ENCODE measurements at regions of chr16 and their contacts with region 1.

Region 1: GRCh38 chr16:57422026-57422944 is 17.7 kb downstream of the CCL17 start:
- DNase-seq: peak; percentile 55 to 72
- ATAC-seq: peak; percentile 67 to 73
- H3K4me3 ChIP-seq: no peak overlapping the region
- H3K27ac ChIP-seq: peak overlapping the region in 1 of 2 experiments; percentile 47; a peak in 3 of 6 replicates
- H3K4me1 ChIP-seq: peaks cover 31% of the 10 kb centered on the region
- CTCF ChIP-seq: peak; percentile 75
- EP300 ChIP-seq: no peak
- POLR2A ChIP-seq: no peak
- RAD21 ChIP-seq: peak; percentile 82 to 86

Region 2: GRCh38 chr16:57084257-57084770 is 338.0 kb before region 1 on chr16:
- CTCF ChIA-PET with region 1: interaction called, 10 read pairs
- POLR2A ChIA-PET with region 1: no interaction called
- DNase-seq: peak; percentile 81 to 93
- ATAC-seq: peak; percentile 67 to 87
- H3K4me3 ChIP-seq: no peak overlapping the region
- H3K27ac ChIP-seq: peak overlapping the region in 1 of 2 experiments; percentile 56; a peak in 3 of 6 replicates
- H3K4me1 ChIP-seq: no peaks in the 10 kb centered on the region
- CTCF ChIP-seq: peak; percentile 90
- EP300 ChIP-seq: no peak
- POLR2A ChIP-seq: no peak
- RAD21 ChIP-seq: peak; percentile 86 to 90

Region 3: DNA sequence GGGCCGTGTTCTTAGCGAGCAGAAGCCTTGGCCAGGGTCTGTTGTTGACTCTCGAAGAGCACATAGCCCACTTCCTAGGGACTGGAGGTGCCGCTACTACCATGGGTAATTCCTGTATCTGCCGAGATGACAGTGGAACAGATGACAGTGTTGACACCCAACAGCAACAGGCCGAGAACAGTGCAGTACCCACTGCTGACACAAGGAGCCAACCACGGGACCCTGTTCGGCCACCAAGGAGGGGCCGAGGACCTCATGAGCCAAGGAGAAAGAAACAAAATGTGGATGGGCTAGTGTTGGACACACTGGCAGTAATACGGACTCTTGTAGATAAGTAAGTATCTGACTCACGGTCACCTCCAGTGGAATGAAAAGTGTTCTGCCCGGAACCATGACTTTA is 217.6 kb before region 1 on chr16:
- CTCF ChIA-PET with region 1: no interaction called
- POLR2A ChIA-PET with region 1: no interaction called
- DNase-seq: no peak
- ATAC-seq: peak in 1 of 2 experiments; percentile 53; a peak in 2 of 6 replicates
- H3K4me3 ChIP-seq: no peak overlapping the region
- H3K27ac ChIP-seq: no peak overlapping the region
- H3K4me1 ChIP-seq: no peaks in the 10 kb centered on the region
- CTCF ChIP-seq: no peak
- EP300 ChIP-seq: 0 out of 5 replicates have a peak, but pooled peaks of 1 of the 2 experiments have one; percentile 16
- POLR2A ChIP-seq: no peak
- RAD21 ChIP-seq: no peak

Region 4: DNA sequence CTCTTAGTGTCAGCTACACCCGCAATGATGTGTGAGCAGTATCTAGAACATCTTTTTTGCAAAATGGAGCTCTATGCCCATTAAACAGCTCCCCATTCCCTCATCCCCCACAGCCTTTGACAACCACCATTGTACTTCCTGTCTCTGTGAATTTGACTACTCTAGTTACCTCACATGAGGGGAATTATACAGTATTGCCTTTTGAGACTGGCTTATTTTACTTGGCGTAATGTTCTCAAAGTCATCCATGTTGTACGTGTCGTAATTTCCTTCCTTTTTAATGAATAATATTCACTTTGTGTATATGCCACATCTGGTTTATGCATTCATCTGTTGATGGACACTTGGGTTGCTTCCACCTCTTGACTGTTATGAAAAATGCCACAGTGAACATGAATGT is 86.9 kb before region 1 on chr16:
- CTCF ChIA-PET with region 1: interaction called, 18 read pairs
- POLR2A ChIA-PET with region 1: no interaction called
- DNase-seq: no peak
- ATAC-seq: no peak
- H3K4me3 ChIP-seq: no peak overlapping the region
- H3K27ac ChIP-seq: no peak overlapping the region
- H3K4me1 ChIP-seq: peaks cover 8% of the 10 kb centered on the region; the same call in 2 of the 3 replicates
- CTCF ChIP-seq: no peak
- EP300 ChIP-seq: no peak
- POLR2A ChIP-seq: no peak
- RAD21 ChIP-seq: no peak

Region 5: GRCh38 chr16:57409870-57410585 is 12.3 kb before region 1 on chr16:
- CTCF ChIA-PET with region 1: interaction called, 47 read pairs
- POLR2A ChIA-PET with region 1: no interaction called
- DNase-seq: no peak
- ATAC-seq: no peak
- H3K4me3 ChIP-seq: no peak overlapping the region
- H3K27ac ChIP-seq: no peak overlapping the region
- H3K4me1 ChIP-seq: no peaks in the 10 kb centered on the region
- CTCF ChIP-seq: no peak
- EP300 ChIP-seq: no peak
- POLR2A ChIP-seq: no peak
- RAD21 ChIP-seq: no peak

Region 6: GRCh38 chr16:57447186-57447962 is 25.1 kb after region 1 on chr16 and contains the starts of genes CIAPIN1 and COQ9:
- CTCF ChIA-PET with region 1: interaction called, 30 read pairs
- POLR2A ChIA-PET with region 1: interaction called, 10 read pairs
- DNase-seq: peak; percentile 89 to 93
- ATAC-seq: peak; percentile 100
- H3K4me3 ChIP-seq: peak within 1 kb of the TSS; percentile 96
- H3K27ac ChIP-seq: peak within 1 kb of the TSS; percentile 99
- H3K4me1 ChIP-seq: peaks cover 27% of the 10 kb centered on the region
- CTCF ChIP-seq: no peak
- EP300 ChIP-seq: no peak
- POLR2A ChIP-seq: peak; percentile 83
- RAD21 ChIP-seq: 0 out of 5 replicates have a peak, but pooled peaks of 1 of the 2 experiments have one; percentile 10
- polyA plus RNA-seq, gene CIAPIN1: 101 and 114 TPM in 2 replicates
- polyA plus RNA-seq, gene COQ9: 109 and 130 TPM in 2 replicates

Region 7: GRCh38 chr16:57500578-57501111 is 78.4 kb after region 1 on chr16:
- CTCF ChIA-PET with region 1: interaction called, 11 read pairs
- POLR2A ChIA-PET with region 1: no interaction called
- DNase-seq: no peak
- ATAC-seq: no peak
- H3K4me3 ChIP-seq: no peak overlapping the region
- H3K27ac ChIP-seq: peak overlapping the region in 1 of 2 experiments; percentile 39; a peak in 3 of 6 replicates
- H3K4me1 ChIP-seq: peaks cover 5% of the 10 kb centered on the region; the same call in 1 of the 3 replicates
- CTCF ChIP-seq: no peak
- EP300 ChIP-seq: no peak
- POLR2A ChIP-seq: no peak
- RAD21 ChIP-seq: no peak

Region 8: GRCh38 chr16:57562669-57563486 is 140.6 kb after region 1 on chr16:
- CTCF ChIA-PET with region 1: no interaction called
- POLR2A ChIA-PET with region 1: no interaction called
- DNase-seq: no peak
- ATAC-seq: no peak
- H3K4me3 ChIP-seq: no peak overlapping the region
- H3K27ac ChIP-seq: peak overlapping the region in 1 of 2 experiments; percentile 3; a peak in 1 of 6 replicates
- H3K4me1 ChIP-seq: 0 out of 3 replicates have a peak, but pooled peaks cover 5% of the 10 kb centered on the region
- CTCF ChIP-seq: no peak
- EP300 ChIP-seq: no peak
- POLR2A ChIP-seq: no peak
- RAD21 ChIP-seq: no peak